ENCODE measurements at regions of chr17 and their contacts with region 1.

Region 1: GRCh38 chr17:35617505-35617904 is 30.4 kb downstream of the AP2B1 start:
- DNase-seq: no peak
- ATAC-seq: no peak
- H3K4me3 ChIP-seq: no peak overlapping the region
- H3K27ac ChIP-seq: no peak overlapping the region
- H3K4me1 ChIP-seq: peaks cover 0 to 6% of the 10 kb centered on the region in 2 donors
- H3K27me3 ChIP-seq: no peaks in the 10 kb centered on the region
- CTCF ChIP-seq: no peak

Region 2: GRCh38 chr17:35747540-35748017 is 130.1 kb after region 1 on chr17:
- intact Hi-C with region 1: loop called in 1 of 2 experiments (anchors 5 kb)
- DNase-seq: peak; percentile 59 to 87 (median 71)
- ATAC-seq: peak; percentile 92
- H3K4me3 ChIP-seq: no peak overlapping the region
- H3K27ac ChIP-seq: no peak overlapping the region
- H3K4me1 ChIP-seq: peaks cover 0 to 5% of the 10 kb centered on the region in 2 donors
- H3K27me3 ChIP-seq: peaks cover 6 to 65% of the 10 kb centered on the region in 2 donors
- CTCF ChIP-seq: peak; percentile 85 to 87